ENCODE measurements at regions of chr7 and their contacts with region 1.

Region 1: DNA sequence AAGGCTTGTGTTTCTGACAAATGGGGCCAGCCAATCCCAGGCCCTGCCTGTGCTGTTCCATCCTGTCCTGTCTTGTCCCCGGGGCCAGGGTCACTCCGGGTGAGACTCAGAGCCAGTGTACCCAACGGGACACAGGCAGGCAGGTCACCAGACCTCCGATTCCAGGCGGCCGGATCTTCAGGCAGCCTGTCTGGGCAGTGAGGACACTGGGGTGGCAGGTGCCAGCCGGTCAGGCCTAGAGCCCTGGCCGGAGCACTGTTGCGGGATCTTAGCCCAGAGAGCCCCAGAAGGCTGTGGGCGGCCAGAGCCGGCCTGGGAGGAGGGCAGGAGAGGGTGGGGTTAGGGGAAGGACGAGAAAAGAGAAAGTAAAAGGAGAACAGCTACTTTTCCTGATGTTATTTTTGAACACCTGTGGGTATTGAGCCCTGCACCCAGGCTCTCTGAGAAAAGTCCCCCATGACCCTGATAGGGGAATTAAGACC is 134.3 kb upstream of the TNRC18 start:
- DNase-seq: no peak
- ATAC-seq: no peak
- H3K4me3 Mint-ChIP-seq: peak overlapping the region; percentile 63; the same call in 1 of the 2 replicates
- H3K27ac Mint-ChIP-seq: peak overlapping the region; percentile 87; the same call in 1 of the 2 replicates
- H3K4me1 Mint-ChIP-seq: peaks cover 25% of the 10 kb centered on the region
- H3K27me3 Mint-ChIP-seq: no peaks in the 10 kb centered on the region
- CTCF ChIP-seq: no peak

Region 2: GRCh38 chr7:5526100-5526905 is 31.7 kb before region 1 on chr7:
- CTCF ChIA-PET with region 1: interaction called, 23 read pairs
- POLR2A ChIA-PET with region 1: no interaction called
- DNase-seq: peak; percentile 37
- ATAC-seq: peak; percentile 7
- H3K4me3 Mint-ChIP-seq: peak overlapping the region; percentile 94
- H3K27ac Mint-ChIP-seq: peak overlapping the region; percentile 92
- H3K4me1 Mint-ChIP-seq: peaks cover 27% of the 10 kb centered on the region
- H3K27me3 Mint-ChIP-seq: peaks cover 6% of the 10 kb centered on the region; the same call in 1 of the 2 replicates
- CTCF ChIP-seq: no peak

Measured in WTC11 (cell line).